GM12878 (cell line): ENCODE measurements at regions of chr10 and their contacts with region 1.

Region 1: DNA sequence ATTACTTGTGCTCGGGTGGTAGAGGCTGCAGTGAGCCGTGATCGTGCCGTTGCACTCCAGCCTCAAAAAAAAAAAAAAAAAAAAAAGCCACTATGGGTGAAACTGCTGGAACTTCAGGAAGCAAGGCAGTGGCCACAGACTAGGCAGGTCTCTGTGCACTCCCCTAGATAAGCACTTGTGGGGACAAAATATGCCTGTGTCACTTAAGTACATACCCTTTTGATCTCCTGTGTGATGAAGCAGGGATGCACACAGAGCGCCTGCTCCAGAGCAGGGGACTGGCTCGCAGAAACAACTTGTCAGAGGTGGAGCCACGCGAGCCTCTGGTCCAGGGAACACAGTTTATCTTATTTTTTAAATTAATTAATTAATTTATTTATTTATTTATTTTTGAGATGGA is 42.9 kb upstream of the PSAP start:
- DNase-seq: no peak
- ATAC-seq: no peak
- H3K4me3 ChIP-seq: no peak overlapping the region
- H3K27ac ChIP-seq: no peak overlapping the region
- H3K4me1 ChIP-seq: peaks cover 16% of the 10 kb centered on the region
- H3K27me3 ChIP-seq: no peaks in the 10 kb centered on the region
- CTCF ChIP-seq: no peak
- EP300 ChIP-seq: no peak
- POLR2A ChIP-seq: no peak
- RAD21 ChIP-seq: no peak

Region 2: GRCh38 chr10:71666639-71667386 is 227.1 kb before region 1 on chr10:
- CTCF ChIA-PET with region 1: interaction called, 12 read pairs
- POLR2A ChIA-PET with region 1: no interaction called
- RAD21 ChIA-PET with region 1: no interaction called
- SMC1A ChIA-PET with region 1: no interaction called
- in situ Hi-C with region 1: no loop called
- intact Hi-C with region 1: no loop called
- DNase-seq: peak; percentile 5
- ATAC-seq: peak; percentile 57
- H3K4me3 ChIP-seq: no peak overlapping the region
- H3K27ac ChIP-seq: no peak overlapping the region
- H3K4me1 ChIP-seq: peaks cover 17% of the 10 kb centered on the region
- H3K27me3 ChIP-seq: no peaks in the 10 kb centered on the region; a peak in 1 of 4 replicates
- CTCF ChIP-seq: no peak
- EP300 ChIP-seq: 0 out of 4 replicates have a peak, but pooled peaks of 1 of the 2 experiments have one; percentile 26
- POLR2A ChIP-seq: no peak
- RAD21 ChIP-seq: no peak

Region 3: DNA sequence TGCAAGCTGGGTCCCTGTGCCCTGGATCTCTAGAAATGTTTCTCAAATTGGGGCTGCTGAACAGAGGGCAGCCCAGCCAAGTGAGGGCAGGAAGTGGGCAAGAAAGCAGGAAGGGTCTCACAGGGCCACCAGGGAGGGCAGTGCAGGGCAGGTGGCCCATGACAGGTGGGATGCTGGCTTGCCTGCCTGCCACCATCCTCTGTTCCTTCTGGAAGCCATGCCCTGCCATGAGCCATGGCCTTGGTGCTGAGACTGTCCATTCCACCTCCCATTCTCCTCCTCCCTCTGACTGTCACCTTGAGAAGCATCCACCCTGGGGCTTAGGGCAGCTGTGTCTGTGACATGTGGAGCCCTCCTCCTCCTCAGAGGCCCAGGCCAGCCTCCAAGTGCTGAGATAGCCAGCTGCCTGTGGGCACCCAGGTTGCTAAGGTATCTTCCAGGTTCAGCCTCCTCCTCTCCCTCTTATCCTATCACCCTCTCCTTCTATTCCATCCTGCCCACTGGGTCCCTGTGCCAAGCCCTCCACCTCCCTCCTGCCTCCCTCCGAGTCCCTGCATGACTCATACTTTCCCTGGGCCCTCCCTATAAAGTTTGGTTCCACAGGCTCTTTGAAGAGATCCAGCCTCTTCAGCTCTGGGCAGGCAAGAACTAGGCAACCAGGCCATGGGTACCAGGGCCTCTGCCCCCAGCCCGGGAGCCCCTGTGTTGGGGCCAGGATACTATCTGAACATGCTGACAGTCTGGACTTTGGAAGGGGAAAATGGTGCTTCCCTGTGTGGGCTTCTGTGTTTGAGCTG is 121.9 kb before region 1 on chr10:
- CTCF ChIA-PET with region 1: interaction called, 14 read pairs
- POLR2A ChIA-PET with region 1: no interaction called
- RAD21 ChIA-PET with region 1: interaction called, 19 read pairs
- SMC1A ChIA-PET with region 1: interaction called, 11 read pairs
- in situ Hi-C with region 1: no loop called
- intact Hi-C with region 1: no loop called
- DNase-seq: no peak
- ATAC-seq: no peak
- H3K4me3 ChIP-seq: peak overlapping the region; percentile 76; the same call in 1 of the 2 replicates
- H3K27ac ChIP-seq: peak overlapping the region; percentile 14; the same call in 1 of the 2 replicates
- H3K4me1 ChIP-seq: peaks cover 70% of the 10 kb centered on the region
- H3K27me3 ChIP-seq: no peaks in the 10 kb centered on the region
- CTCF ChIP-seq: no peak
- EP300 ChIP-seq: no peak
- POLR2A ChIP-seq: no peak
- RAD21 ChIP-seq: no peak

Region 4: GRCh38 chr10:71850637-71851464 is 43.1 kb before region 1 on chr10 and contains the start of gene PSAP:
- CTCF ChIA-PET with region 1: interaction called, 10 read pairs
- POLR2A ChIA-PET with region 1: no interaction called
- RAD21 ChIA-PET with region 1: interaction called, 5 read pairs
- SMC1A ChIA-PET with region 1: interaction called, 4 read pairs
- in situ Hi-C with region 1: no loop called
- intact Hi-C with region 1: no loop called
- DNase-seq: peak; percentile 91
- ATAC-seq: peak; percentile 97
- H3K4me3 ChIP-seq: peak within 1 kb of the TSS; percentile 74
- H3K27ac ChIP-seq: peak within 1 kb of the TSS; percentile 79
- H3K4me1 ChIP-seq: peaks cover 14% of the 10 kb centered on the region
- H3K27me3 ChIP-seq: no peaks in the 10 kb centered on the region
- CTCF ChIP-seq: peak in 1 of 3 experiments; percentile 4; a peak in 1 of 6 replicates
- EP300 ChIP-seq: no peak
- POLR2A ChIP-seq: peak; percentile 100
- RAD21 ChIP-seq: no peak
- polyA plus RNA-seq, gene PSAP: 280 to 312 TPM

Region 5: GRCh38 chr10:71957546-71958275 is 63.8 kb after region 1 on chr10:
- CTCF ChIA-PET with region 1: interaction called, 23 read pairs
- POLR2A ChIA-PET with region 1: no interaction called
- RAD21 ChIA-PET with region 1: interaction called, 5 read pairs
- SMC1A ChIA-PET with region 1: interaction called, 21 read pairs
- in situ Hi-C with region 1: no loop called
- intact Hi-C with region 1: no loop called
- DNase-seq: no peak
- ATAC-seq: no peak
- H3K4me3 ChIP-seq: no peak overlapping the region
- H3K27ac ChIP-seq: no peak overlapping the region
- H3K4me1 ChIP-seq: no peaks in the 10 kb centered on the region
- H3K27me3 ChIP-seq: peaks cover 0 to 3% of the 10 kb centered on the region in 2 experiments; a peak in 1 of 4 replicates
- CTCF ChIP-seq: no peak
- EP300 ChIP-seq: no peak
- POLR2A ChIP-seq: no peak
- RAD21 ChIP-seq: no peak

Region 6: DNA sequence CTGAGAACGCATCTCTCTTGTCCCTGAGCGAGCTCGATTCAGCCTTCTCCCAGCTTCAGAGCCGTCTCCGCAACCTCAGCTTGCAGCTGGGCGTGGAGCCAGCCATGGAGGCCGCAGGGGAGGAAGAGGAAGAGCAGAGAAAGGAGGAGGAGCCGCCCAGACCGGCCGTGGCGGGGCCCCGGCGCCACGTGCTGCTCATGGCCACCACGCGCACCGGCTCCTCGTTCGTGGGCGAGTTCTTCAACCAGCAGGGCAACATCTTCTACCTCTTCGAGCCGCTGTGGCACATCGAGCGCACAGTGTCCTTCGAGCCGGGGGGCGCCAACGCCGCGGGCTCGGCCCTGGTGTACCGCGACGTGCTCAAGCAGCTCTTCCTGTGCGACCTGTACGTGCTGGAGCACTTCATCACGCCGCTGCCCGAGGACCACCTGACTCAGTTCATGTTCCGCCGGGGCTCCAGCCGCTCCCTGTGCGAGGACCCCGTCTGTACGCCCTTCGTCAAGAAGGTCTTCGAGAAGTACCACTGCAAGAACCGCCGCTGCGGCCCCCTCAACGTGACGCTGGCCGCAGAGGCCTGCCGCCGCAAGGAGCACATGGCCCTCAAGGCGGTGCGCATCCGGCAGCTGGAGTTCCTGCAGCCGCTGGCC is 113.4 kb after region 1 on chr10:
- CTCF ChIA-PET with region 1: no interaction called
- POLR2A ChIA-PET with region 1: no interaction called
- RAD21 ChIA-PET with region 1: no interaction called
- SMC1A ChIA-PET with region 1: no interaction called
- in situ Hi-C with region 1: no loop called
- intact Hi-C with region 1: no loop called
- DNase-seq: no peak
- ATAC-seq: no peak
- H3K4me3 ChIP-seq: no peak overlapping the region
- H3K27ac ChIP-seq: no peak overlapping the region
- H3K4me1 ChIP-seq: no peaks in the 10 kb centered on the region
- H3K27me3 ChIP-seq: no peaks in the 10 kb centered on the region
- CTCF ChIP-seq: no peak
- EP300 ChIP-seq: no peak
- POLR2A ChIP-seq: no peak
- RAD21 ChIP-seq: no peak

Region 7: GRCh38 chr10:72331601-72332422 is 437.9 kb after region 1 on chr10:
- CTCF ChIA-PET with region 1: interaction called, 14 read pairs
- POLR2A ChIA-PET with region 1: no interaction called
- RAD21 ChIA-PET with region 1: interaction called, 13 read pairs
- SMC1A ChIA-PET with region 1: interaction called, 8 read pairs
- in situ Hi-C with region 1: loop called (anchors 10 kb)
- intact Hi-C with region 1: loop called (anchors 2 kb)
- DNase-seq: peak; percentile 96
- ATAC-seq: peak; percentile 80
- H3K4me3 ChIP-seq: 0 out of 2 replicates have a peak overlapping the region, but pooled peaks have one; percentile 4
- H3K27ac ChIP-seq: peak overlapping the region; percentile 95
- H3K4me1 ChIP-seq: peaks cover 76% of the 10 kb centered on the region
- H3K27me3 ChIP-seq: no peaks in the 10 kb centered on the region
- CTCF ChIP-seq: peak; percentile 1 to 50 (median 13); a peak in 1 of 6 replicates
- EP300 ChIP-seq: peak; percentile 31 to 85; a peak in 3 of 4 replicates
- POLR2A ChIP-seq: peak; percentile 68
- RAD21 ChIP-seq: no peak